ENCODE measurements at regions of chr15 and their contacts with region 1.

Region 1: DNA sequence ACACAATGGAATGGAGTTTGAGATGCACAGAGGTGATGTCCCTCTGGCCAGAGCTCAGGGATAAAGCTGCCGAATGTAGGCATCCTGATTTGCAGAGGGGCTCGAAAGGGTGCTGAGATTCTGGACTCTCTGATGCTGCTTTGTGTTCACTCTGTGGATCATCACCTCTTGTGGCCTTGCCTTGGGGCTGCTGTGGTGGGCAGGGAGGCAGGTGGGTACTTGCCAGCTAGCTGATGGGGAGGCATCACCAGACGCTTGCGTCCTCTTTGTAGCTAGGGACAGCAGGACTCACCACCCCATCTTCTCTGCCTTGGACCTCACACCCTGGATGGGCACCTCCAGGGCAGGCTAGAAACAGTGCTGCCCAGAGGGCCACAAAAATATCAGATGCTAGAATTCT is 14.6 kb upstream of the RASGRF1 start:
- DNase-seq: no peak
- H3K4me3 ChIP-seq: no peak overlapping the region
- H3K27ac ChIP-seq: no peak overlapping the region
- H3K4me1 ChIP-seq: no peaks in the 10 kb centered on the region
- H3K27me3 ChIP-seq: no peaks in the 10 kb centered on the region
- CTCF ChIP-seq: no peak

Region 2: GRCh38 chr15:79035111-79035601 is 70.0 kb before region 1 on chr15:
- CTCF ChIA-PET with region 1: no interaction called
- dilution Hi-C with region 1: loop called (anchors 5 kb)
- in situ Hi-C with region 1: no loop called
- intact Hi-C with region 1: no loop called
- DNase-seq: peak; percentile 63
- H3K4me3 ChIP-seq: no peak overlapping the region
- H3K27ac ChIP-seq: no peak overlapping the region
- H3K4me1 ChIP-seq: peaks cover 20% of the 10 kb centered on the region
- H3K27me3 ChIP-seq: no peaks in the 10 kb centered on the region
- CTCF ChIP-seq: peak; percentile 53 to 68

Measured in mammary epithelial cell (primary cell).